Caco-2 (cell line): ENCODE measurements at regions of chr6 and their contacts with region 1.

Region 1: DNA sequence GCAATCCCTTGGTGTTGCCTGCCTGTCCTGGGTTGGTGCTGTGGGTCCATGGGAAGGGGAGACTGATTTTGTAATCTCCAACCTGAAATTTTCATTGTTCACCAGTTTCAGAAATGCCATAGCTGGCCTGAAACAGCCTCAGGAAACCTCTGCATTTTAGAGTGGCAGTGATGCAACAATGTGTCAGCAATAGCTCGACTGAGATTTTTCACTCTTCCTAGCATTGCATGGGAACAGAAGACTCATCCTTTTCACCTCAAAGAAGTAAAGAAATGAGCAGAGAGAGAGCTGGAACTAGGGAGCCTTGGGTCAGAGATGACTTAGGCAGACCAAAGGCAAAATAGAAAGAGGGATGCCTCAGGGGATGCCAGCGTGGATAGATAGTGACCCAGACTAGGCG is 23.7 kb upstream of the TMEM14A start:
- DNase-seq: no peak
- H3K4me3 ChIP-seq: no peak overlapping the region
- H3K4me3 Mint-ChIP-seq: no peak overlapping the region
- H3K27ac Mint-ChIP-seq: no peak overlapping the region
- H3K4me1 ChIP-seq: no peaks in the 10 kb centered on the region
- H3K4me1 Mint-ChIP-seq: peaks cover 7% of the 10 kb centered on the region
- H3K27me3 ChIP-seq: no peaks in the 10 kb centered on the region
- H3K27me3 Mint-ChIP-seq: no peaks in the 10 kb centered on the region
- CTCF ChIP-seq: no peak

Region 2: DNA sequence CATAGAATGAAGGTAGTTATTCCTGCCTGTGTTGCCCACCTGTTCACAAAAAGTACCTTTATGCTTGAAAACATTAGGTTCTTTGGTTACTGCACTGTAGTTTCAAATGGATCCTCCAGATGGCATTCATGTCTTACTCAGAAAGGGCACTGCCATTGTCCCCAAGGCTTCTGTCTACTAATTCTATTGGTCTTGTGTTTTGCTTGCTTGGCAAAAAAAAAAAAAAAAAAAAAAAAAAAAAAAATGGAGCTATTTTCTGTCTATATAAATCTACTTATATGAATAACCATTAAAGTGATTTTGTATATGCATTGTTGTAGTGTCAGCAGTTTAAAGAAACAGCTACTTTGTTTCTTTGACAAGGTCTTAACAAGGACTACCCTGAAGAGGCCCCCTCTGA is 239.7 kb before region 1 on chr6:
- CTCF ChIA-PET with region 1: interaction called, 12 read pairs
- POLR2A ChIA-PET with region 1: no interaction called
- intact Hi-C with region 1: no loop called
- DNase-seq: peak in 1 of 2 experiments; percentile 50
- H3K4me3 ChIP-seq: no peak overlapping the region
- H3K4me3 Mint-ChIP-seq: no peak overlapping the region
- H3K27ac Mint-ChIP-seq: no peak overlapping the region
- H3K4me1 ChIP-seq: no peaks in the 10 kb centered on the region
- H3K4me1 Mint-ChIP-seq: peaks cover 2% of the 10 kb centered on the region
- H3K27me3 ChIP-seq: no peaks in the 10 kb centered on the region
- H3K27me3 Mint-ChIP-seq: no peaks in the 10 kb centered on the region
- CTCF ChIP-seq: peak; percentile 45 to 51

Region 3: GRCh38 chr6:52497652-52498408 is 149.4 kb before region 1 on chr6:
- CTCF ChIA-PET with region 1: no interaction called
- POLR2A ChIA-PET with region 1: no interaction called
- intact Hi-C with region 1: loop called (anchors 5 kb)
- DNase-seq: no peak
- H3K4me3 ChIP-seq: no peak overlapping the region
- H3K4me3 Mint-ChIP-seq: no peak overlapping the region
- H3K27ac Mint-ChIP-seq: no peak overlapping the region
- H3K4me1 ChIP-seq: no peaks in the 10 kb centered on the region
- H3K4me1 Mint-ChIP-seq: no peaks in the 10 kb centered on the region
- H3K27me3 ChIP-seq: no peaks in the 10 kb centered on the region
- H3K27me3 Mint-ChIP-seq: no peaks in the 10 kb centered on the region
- CTCF ChIP-seq: no peak

Region 4: DNA sequence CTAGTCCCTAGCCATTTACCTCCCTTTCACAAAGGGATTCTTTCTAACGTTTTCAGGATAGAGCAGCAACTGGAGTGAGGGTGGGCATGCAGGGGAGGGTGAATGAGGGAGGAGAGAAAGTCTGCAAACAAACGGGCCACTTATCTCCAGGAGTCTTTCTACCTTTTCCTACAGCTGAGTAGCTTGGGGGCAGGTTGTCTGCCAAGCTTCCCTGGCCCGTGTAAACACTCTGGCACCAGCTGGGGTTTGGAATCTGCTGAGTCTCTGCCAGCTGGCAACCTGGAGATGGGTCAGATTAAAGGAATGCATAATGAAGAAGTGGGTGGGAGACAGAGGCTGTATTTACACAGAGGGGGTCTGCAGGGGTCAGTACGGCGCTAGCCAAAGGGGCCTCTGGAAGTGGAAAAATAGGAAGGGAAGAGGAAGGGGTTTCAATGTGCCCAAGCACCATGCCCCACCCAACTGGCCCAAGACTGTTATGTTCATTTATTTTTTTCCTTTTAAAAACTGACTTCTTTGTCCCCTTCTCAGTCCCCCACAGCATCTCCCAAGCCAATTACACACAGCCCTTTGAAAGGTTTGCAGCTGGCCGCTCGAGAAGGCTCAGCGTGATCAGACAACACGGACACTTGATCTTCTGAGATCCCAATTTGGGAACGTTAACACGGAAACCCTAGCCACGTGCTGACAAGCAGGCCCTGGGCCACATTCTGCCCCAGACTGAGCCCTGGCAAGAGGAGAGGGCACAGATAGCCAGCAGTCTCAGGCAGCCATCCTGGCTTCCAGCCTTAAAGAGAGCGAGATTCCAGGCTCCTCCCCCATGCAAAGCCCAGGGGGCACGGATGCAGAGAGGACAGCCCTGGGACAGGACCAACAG is 95.6 kb before region 1 on chr6:
- CTCF ChIA-PET with region 1: no interaction called
- POLR2A ChIA-PET with region 1: no interaction called
- intact Hi-C with region 1: no loop called
- DNase-seq: no peak
- H3K4me3 ChIP-seq: no peak overlapping the region
- H3K4me3 Mint-ChIP-seq: no peak overlapping the region
- H3K27ac Mint-ChIP-seq: peak overlapping the region; percentile 49
- H3K4me1 ChIP-seq: peaks cover 30% of the 10 kb centered on the region
- H3K4me1 Mint-ChIP-seq: peaks cover 35% of the 10 kb centered on the region
- H3K27me3 ChIP-seq: no peaks in the 10 kb centered on the region
- H3K27me3 Mint-ChIP-seq: no peaks in the 10 kb centered on the region
- CTCF ChIP-seq: no peak

Region 5: GRCh38 chr6:52686878-52687699 is 39.9 kb after region 1 on chr6:
- CTCF ChIA-PET with region 1: no interaction called
- POLR2A ChIA-PET with region 1: no interaction called
- intact Hi-C with region 1: no loop called
- DNase-seq: no peak
- H3K4me3 ChIP-seq: no peak overlapping the region
- H3K4me3 Mint-ChIP-seq: no peak overlapping the region
- H3K27ac Mint-ChIP-seq: no peak overlapping the region
- H3K4me1 ChIP-seq: no peaks in the 10 kb centered on the region
- H3K4me1 Mint-ChIP-seq: no peaks in the 10 kb centered on the region
- H3K27me3 ChIP-seq: no peaks in the 10 kb centered on the region
- H3K27me3 Mint-ChIP-seq: no peaks in the 10 kb centered on the region
- CTCF ChIP-seq: no peak